Left lung (tissue), 14 donors: ENCODE measurements at regions of chr15 and their contacts with region 1.

Region 1: DNA sequence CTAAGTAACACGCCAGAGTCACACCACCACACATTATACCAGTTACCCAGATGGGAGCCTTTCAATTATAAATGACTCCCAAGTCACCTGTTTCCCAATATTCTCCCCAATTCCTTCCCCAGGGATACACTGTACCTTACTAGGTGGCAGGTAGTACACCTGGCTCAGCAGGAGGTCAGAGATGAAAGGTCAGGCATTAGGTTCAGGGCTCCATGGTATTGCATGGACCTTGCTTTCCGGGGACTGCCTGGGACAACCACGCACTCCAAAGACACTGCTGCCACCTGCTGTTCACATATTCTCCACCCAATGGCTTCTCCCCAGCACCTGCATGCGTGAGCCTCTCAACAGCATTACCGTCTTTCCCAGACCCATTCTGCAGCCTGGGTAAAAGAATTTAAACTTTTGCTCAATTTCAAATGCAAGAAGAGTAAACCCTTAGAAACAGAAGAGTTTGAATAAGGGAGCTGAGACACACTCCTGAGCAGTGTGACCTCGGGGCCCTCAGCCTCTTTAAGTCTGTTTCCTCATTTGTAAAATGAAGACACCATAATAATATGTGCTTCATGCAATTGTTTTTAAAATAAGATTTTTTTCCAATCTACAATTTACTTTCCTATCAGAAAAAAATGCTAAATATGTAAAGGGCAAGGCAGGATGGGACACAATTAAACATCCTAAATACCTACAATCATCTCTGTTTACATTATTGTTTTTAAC is 28.0 kb upstream of the LACTB start:
- DNase-seq: peak; percentile 73 to 87 (median 81)
- ATAC-seq: peak; percentile 96
- H3K4me3 ChIP-seq: no peak overlapping the region
- H3K27ac ChIP-seq: peak overlapping the region in 1 of 2 donors; percentile 2
- H3K4me1 ChIP-seq: peaks cover 4 to 9% of the 10 kb centered on the region in 2 donors
- H3K27me3 ChIP-seq: no peaks in the 10 kb centered on the region
- CTCF ChIP-seq: peak; percentile 80 to 83

Region 2: GRCh38 chr15:62782039-62782791 is 311.4 kb before region 1 on chr15:
- intact Hi-C with region 1: loop called in 1 of 2 experiments (anchors 10 kb)
- DNase-seq: peak in 3 of 4 donors; percentile 47 to 80 (median 64)
- ATAC-seq: peak; percentile 94
- H3K4me3 ChIP-seq: no peak overlapping the region
- H3K27ac ChIP-seq: no peak overlapping the region
- H3K4me1 ChIP-seq: peaks cover 0 to 9% of the 10 kb centered on the region in 2 donors
- H3K27me3 ChIP-seq: no peaks in the 10 kb centered on the region
- CTCF ChIP-seq: peak; percentile 42 to 49

Region 3: GRCh38 chr15:62847900-62848489 is 245.7 kb before region 1 on chr15:
- intact Hi-C with region 1: loop called in 1 of 2 experiments (anchors 5 kb)
- DNase-seq: peak in 2 of 4 donors; percentile 28 to 45
- ATAC-seq: peak; percentile 69
- H3K4me3 ChIP-seq: no peak overlapping the region
- H3K27ac ChIP-seq: no peak overlapping the region
- H3K4me1 ChIP-seq: peaks cover 0 to 9% of the 10 kb centered on the region in 2 donors
- H3K27me3 ChIP-seq: no peaks in the 10 kb centered on the region
- CTCF ChIP-seq: peak; percentile 51 to 67

Region 4: DNA sequence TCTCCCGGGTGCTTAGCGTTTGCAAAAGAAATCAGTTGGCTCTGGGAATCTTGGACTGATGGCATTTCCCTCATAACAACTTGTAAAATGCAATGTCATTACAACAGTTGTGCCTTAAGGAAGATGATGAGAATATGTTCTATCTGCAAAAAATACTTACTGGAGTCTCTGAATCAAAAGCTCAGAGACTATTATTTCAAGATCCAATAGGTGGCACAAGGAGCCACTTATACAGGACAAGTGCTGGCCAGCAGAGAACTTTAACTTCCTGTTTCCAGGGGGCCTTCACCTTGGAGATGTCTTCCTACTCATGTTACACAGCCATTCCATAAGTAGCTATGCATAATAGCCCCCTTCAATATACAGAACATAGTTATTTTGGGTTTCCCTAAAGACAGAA is 72.6 kb after region 1 on chr15:
- intact Hi-C with region 1: no loop called
- DNase-seq: no peak
- ATAC-seq: peak; percentile 59
- H3K4me3 ChIP-seq: no peak overlapping the region
- H3K27ac ChIP-seq: no peak overlapping the region
- H3K4me1 ChIP-seq: no peaks in the 10 kb centered on the region
- H3K27me3 ChIP-seq: no peaks in the 10 kb centered on the region
- CTCF ChIP-seq: no peak